Heart left ventricle (tissue), 16 donors: ENCODE measurements at regions of chr9 and their contacts with region 1.

Region 1: GRCh38 chr9:77163884-77164283 is 13.4 kb upstream of the VPS13A start:
- DNase-seq: no peak
- ATAC-seq: no peak
- H3K4me3 ChIP-seq: no peak overlapping the region
- H3K27ac ChIP-seq: no peak overlapping the region
- H3K4me1 ChIP-seq: peaks cover 0 to 5% (median 0%) of the 10 kb centered on the region in 12 donors
- H3K27me3 ChIP-seq: no peaks in the 10 kb centered on the region
- CTCF ChIP-seq: no peak
- POLR2A ChIP-seq: no peak

Region 2: DNA sequence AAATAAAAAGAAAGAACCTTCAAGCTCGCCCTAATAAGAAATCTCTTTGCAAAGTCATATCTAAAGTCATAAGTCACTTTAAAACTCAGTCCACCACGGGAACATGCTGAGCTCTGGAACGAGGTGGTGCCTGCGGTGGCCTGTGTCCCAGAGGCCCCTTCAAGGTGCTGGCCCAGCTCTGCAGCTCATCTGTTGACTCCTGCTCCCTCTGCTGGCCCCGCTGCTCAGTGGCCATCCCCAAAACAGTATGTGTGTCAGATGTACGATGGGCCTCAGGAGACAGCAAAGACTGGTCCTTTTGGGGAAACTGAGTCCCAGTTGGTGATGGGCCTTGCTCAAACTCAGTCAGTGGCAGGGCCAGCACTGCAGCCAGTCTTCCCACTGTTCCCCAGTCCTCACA is 167.2 kb before region 1 on chr9:
- intact Hi-C with region 1: loop called in 1 of 10 experiments (anchors 10 kb)
- DNase-seq: peak in 3 of 5 donors; percentile 33 to 63 (median 35)
- ATAC-seq: peak; percentile 75 to 95 (median 85)
- H3K4me3 ChIP-seq: no peak overlapping the region
- H3K27ac ChIP-seq: no peak overlapping the region
- H3K4me1 ChIP-seq: no peaks in the 10 kb centered on the region
- H3K27me3 ChIP-seq: peaks cover 0 to 5% (median 0%) of the 10 kb centered on the region in 9 donors
- CTCF ChIP-seq: peak; percentile 14 to 62 (median 36)
- POLR2A ChIP-seq: no peak

Region 3: GRCh38 chr9:77142366-77142765 is 21.5 kb before region 1 on chr9:
- intact Hi-C with region 1: no loop called
- DNase-seq: no peak
- ATAC-seq: no peak
- H3K4me3 ChIP-seq: no peak overlapping the region
- H3K27ac ChIP-seq: no peak overlapping the region
- H3K4me1 ChIP-seq: no peaks in the 10 kb centered on the region
- H3K27me3 ChIP-seq: peaks cover 0 to 3% (median 0%) of the 10 kb centered on the region in 9 donors
- CTCF ChIP-seq: no peak
- POLR2A ChIP-seq: no peak

Region 4: DNA sequence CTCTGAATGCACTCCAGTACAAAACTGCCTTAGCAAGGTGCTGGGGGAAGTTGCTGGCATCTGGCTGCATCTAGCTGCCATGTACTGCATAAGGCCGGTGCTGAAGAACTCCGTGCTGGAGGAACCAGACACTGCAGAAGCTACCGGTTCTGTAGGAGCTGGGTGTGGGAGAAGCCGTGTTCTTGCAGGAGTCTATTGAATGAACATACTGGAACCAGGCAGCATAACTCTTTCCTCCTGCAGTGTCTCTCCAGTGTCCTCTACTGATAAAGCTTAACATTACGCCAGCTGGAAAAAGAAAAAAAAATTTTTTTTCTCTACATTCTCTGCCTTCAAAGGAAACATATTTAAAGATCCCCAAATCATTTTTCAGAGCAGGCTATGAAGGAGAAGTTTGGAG is 52.0 kb after region 1 on chr9:
- intact Hi-C with region 1: loop called in 4 of 10 experiments (anchors 5 to 10 kb)
- DNase-seq: no peak
- ATAC-seq: no peak
- H3K4me3 ChIP-seq: no peak overlapping the region
- H3K27ac ChIP-seq: no peak overlapping the region
- H3K4me1 ChIP-seq: no peaks in the 10 kb centered on the region
- H3K27me3 ChIP-seq: no peaks in the 10 kb centered on the region
- CTCF ChIP-seq: peak in 5 of 12 donors; percentile 15 to 36 (median 24)
- POLR2A ChIP-seq: no peak